ENCODE measurements at regions of chr10 and their contacts with region 1.

Region 1: DNA sequence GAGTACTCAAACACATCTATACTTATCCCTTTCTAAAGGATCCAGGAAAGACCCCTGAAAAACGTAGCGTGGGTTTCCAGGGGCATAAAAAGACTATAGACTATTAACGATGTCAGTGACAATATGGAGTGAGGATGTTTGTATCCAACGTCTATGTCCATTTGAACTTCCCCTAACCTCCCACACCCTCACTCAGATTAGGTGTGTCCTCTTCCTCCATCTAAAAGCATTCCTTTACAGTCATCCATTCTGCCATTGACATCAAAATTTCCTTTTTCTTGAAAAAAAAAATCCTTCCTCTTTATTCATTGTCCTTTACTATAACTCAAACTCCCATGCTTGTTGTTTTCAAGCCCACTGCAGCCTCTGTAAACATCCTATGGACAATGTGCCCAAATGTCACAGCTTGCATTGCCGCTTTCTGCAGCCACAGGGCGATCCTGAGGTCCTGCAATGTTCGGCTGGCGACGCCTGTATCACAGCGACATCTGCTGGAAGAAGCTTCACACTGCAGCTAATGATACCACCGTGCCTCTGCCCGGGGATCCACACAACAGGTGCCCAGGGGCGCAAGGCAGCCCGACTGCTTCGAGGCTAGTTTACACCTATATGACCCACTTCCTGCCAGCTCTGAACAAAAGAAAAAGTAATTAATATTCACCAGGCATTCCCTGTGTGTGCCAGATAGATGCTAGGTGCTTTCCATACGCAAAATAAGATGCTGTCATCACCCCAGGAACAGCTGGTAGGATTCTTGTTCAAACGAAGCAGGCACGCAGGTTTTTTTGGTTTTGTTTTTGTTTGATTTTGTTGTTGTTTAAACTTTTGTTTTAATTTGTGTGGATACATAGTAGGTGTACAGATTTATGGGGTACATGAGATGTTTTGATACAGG is 267.9 kb upstream of the GHITM start:
- DNase-seq: peak; percentile 84
- ATAC-seq: peak; percentile 95
- H3K4me3 Mint-ChIP-seq: no peak overlapping the region
- H3K27ac Mint-ChIP-seq: no peak overlapping the region
- H3K4me1 Mint-ChIP-seq: peaks cover 16% of the 10 kb centered on the region
- H3K27me3 Mint-ChIP-seq: peaks cover 3% of the 10 kb centered on the region; the same call in 1 of the 2 replicates
- CTCF ChIP-seq: peak; percentile 92

Region 2: GRCh38 chr10:83539528-83540308 is 331.7 kb before region 1 on chr10:
- CTCF ChIA-PET with region 1: interaction called, 14 read pairs
- POLR2A ChIA-PET with region 1: no interaction called
- DNase-seq: no peak
- ATAC-seq: peak; percentile 86
- H3K4me3 Mint-ChIP-seq: no peak overlapping the region
- H3K27ac Mint-ChIP-seq: no peak overlapping the region
- H3K4me1 Mint-ChIP-seq: peaks cover 35% of the 10 kb centered on the region
- H3K27me3 Mint-ChIP-seq: peaks cover 22% of the 10 kb centered on the region
- CTCF ChIP-seq: no peak

Region 3: DNA sequence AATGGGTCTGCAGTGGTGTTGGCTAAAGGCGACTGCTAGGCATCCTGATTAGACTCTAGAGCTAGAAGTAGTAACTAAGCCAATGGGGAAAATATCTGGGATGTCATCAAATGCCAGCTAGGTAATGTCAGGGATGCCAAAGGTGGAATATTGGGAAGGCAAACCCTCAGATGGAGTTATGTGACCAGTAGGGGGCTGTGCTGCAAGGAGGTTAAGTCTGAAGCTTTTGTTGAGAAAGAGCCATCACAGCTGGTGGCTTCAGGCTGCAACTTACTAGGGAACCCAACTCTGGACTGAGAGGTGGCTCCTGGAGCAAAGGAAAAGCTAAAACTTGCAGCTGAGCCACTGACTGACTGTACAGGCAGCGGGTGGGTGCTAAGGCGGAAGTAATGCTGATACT is 309.1 kb before region 1 on chr10:
- CTCF ChIA-PET with region 1: interaction called, 20 read pairs
- POLR2A ChIA-PET with region 1: no interaction called
- DNase-seq: no peak
- ATAC-seq: peak; percentile 83
- H3K4me3 Mint-ChIP-seq: no peak overlapping the region
- H3K27ac Mint-ChIP-seq: no peak overlapping the region; the same call in 1 of the 2 replicates
- H3K4me1 Mint-ChIP-seq: peaks cover 6% of the 10 kb centered on the region; the same call in 1 of the 2 replicates
- H3K27me3 Mint-ChIP-seq: no peaks in the 10 kb centered on the region
- CTCF ChIP-seq: no peak

Region 4: GRCh38 chr10:83886871-83887270 is 15.4 kb after region 1 on chr10:
- CTCF ChIA-PET with region 1: interaction called, 10 read pairs
- POLR2A ChIA-PET with region 1: no interaction called
- DNase-seq: no peak
- ATAC-seq: no peak
- H3K4me3 Mint-ChIP-seq: no peak overlapping the region
- H3K27ac Mint-ChIP-seq: no peak overlapping the region
- H3K4me1 Mint-ChIP-seq: peaks cover 12% of the 10 kb centered on the region
- H3K27me3 Mint-ChIP-seq: no peaks in the 10 kb centered on the region
- CTCF ChIP-seq: no peak

Region 5: DNA sequence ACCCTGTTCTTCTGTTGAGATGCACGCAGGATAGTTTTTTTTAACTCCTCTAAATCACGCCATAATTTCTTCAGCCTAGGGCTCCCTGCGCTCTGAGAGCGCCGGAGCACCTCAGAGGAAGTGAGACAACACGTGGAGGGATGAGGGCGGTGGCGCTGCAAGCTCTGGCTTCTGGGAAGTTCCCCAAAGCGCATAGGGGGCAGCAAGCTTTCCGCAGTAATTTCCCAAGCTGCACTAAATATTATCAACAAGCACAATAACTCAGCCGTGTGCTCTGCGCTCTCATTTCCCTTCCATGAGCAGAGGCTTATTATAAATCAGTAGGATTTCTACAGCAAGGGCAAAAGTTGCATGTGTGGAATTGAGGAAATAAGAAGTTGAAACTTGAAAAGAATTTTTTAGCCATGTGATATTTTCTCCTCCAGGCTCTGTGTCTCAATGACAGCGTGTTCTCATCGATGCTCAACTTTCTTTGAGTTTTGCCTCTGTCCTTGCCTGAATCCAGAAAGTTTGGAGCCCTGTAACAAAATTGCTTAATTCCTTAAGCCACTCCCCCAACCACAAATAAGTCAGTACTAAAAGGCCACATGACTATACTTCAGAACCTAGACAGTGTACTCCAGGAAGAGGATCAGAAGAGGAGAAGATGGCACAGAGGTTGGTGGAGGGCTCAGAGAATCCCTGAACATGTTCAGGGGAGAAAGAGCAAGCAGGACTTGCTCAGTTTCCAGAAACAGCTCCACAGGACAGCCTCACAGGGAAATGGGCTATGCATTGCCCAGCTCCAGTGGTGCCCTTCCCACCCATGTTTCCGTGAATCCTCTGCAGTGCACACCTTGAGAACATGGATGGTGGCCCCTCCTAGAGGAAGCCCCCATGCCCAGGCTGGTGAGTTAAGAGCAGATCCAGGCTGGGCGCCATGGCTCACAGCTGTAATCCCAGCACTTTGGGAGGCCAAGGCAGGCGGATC is 46.4 kb after region 1 on chr10:
- CTCF ChIA-PET with region 1: interaction called, 13 read pairs
- POLR2A ChIA-PET with region 1: interaction called, 3 read pairs
- DNase-seq: peak; percentile 64
- ATAC-seq: peak; percentile 98
- H3K4me3 Mint-ChIP-seq: no peak overlapping the region
- H3K27ac Mint-ChIP-seq: no peak overlapping the region
- H3K4me1 Mint-ChIP-seq: peaks cover 17% of the 10 kb centered on the region
- H3K27me3 Mint-ChIP-seq: peaks cover 19% of the 10 kb centered on the region
- CTCF ChIP-seq: no peak

Region 6: DNA sequence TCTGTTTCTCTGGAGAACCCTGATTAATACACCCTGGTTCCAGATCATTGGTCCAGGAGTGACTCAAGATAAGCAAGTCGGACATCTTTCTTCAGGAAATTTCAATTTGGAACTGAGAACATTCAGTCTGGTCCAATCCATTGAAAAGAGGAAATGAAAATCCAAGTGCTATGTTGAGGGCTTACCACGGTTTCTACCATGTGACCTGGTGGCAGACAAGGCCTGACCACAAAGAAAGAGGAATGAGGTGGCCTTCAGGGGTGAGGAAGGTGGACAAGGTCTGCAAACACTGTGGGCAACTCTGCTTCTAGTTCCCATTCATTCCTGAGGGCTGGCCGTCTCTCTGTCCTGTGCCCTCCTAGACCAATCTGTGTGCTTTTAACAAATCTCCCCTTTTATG is 118.7 kb after region 1 on chr10:
- CTCF ChIA-PET with region 1: no interaction called
- POLR2A ChIA-PET with region 1: no interaction called
- DNase-seq: no peak
- ATAC-seq: no peak
- H3K4me3 Mint-ChIP-seq: no peak overlapping the region
- H3K27ac Mint-ChIP-seq: no peak overlapping the region
- H3K4me1 Mint-ChIP-seq: peaks cover 3% of the 10 kb centered on the region
- H3K27me3 Mint-ChIP-seq: no peaks in the 10 kb centered on the region; the same call in 1 of the 2 replicates
- CTCF ChIP-seq: no peak

Measured in WTC11 (cell line).